Vagina (tissue), 2 donors: ENCODE measurements at regions of chr21 and their contacts with region 1.

Region 1: GRCh38 chr21:45554477-45555175 is 12.4 kb upstream of the SLC19A1 start:
- DNase-seq: no peak
- H3K4me3 ChIP-seq: peak overlapping the region; percentile 60 to 62
- H3K27ac ChIP-seq: peak overlapping the region; percentile 83
- H3K4me1 ChIP-seq: no peaks in the 10 kb centered on the region
- H3K27me3 ChIP-seq: no peaks in the 10 kb centered on the region
- CTCF ChIP-seq: peak; percentile 69 to 91 (median 91)
- POLR2A ChIP-seq: no peak

Region 2: GRCh38 chr21:45496968-45497845 is 57.4 kb before region 1 on chr21:
- intact Hi-C with region 1: no loop called
- DNase-seq: no peak
- H3K4me3 ChIP-seq: no peak overlapping the region
- H3K27ac ChIP-seq: no peak overlapping the region
- H3K4me1 ChIP-seq: no peaks in the 10 kb centered on the region
- H3K27me3 ChIP-seq: no peaks in the 10 kb centered on the region
- CTCF ChIP-seq: no peak
- POLR2A ChIP-seq: no peak

Region 3: DNA sequence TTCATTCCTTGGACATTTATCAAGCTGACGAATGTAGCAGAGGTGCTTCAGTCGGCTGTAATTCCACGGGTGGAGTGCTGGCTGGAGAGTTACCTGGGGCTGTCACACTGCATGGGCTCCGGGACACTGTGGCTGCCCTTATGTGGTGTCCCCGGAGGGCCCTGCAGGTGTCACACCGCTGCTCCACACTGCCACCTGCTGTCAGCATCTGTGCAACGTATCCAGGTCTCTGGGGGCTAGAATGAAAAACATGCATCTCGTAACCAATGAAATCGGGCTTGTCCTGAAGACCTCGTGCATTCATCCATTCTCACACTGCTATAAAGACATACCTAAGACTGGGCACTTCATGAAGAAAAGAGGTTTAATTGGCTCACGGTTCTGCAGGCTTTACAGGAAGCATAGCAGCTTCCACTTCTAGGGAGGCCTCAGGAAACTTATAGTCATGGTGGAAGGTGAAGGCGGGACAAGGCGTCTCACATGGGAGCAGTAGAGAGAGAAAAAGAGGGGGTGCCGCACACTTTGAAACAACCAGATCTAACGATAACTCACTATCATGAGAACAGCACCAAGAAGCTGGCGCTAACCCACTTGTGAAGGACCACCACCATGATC is 42.2 kb after region 1 on chr21:
- intact Hi-C with region 1: loop called (anchors 5 kb)
- DNase-seq: no peak
- H3K4me3 ChIP-seq: no peak overlapping the region
- H3K27ac ChIP-seq: no peak overlapping the region
- H3K4me1 ChIP-seq: no peaks in the 10 kb centered on the region
- H3K27me3 ChIP-seq: no peaks in the 10 kb centered on the region
- CTCF ChIP-seq: peak; percentile 22 to 72 (median 65)
- POLR2A ChIP-seq: no peak

Region 4: DNA sequence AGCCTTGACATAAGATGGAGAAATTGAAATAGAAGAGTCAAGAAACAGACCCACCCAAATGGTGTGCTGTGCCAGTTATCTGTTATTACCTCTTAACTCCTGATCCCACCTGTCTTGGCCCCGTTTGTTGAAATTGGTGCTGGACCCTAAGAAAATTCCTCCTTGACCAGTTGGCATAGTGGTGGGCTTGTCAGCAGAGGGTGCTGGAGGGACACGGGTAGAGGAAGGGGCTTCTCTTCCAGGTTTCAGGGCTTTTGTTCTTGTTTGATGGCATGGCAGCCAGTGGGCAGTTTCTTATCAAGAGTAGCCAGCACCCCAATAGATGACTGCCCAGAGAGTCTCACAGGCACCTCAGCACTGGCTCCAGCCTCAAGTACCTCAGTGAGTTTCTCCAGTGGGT is 140.5 kb after region 1 on chr21:
- intact Hi-C with region 1: no loop called
- DNase-seq: no peak
- H3K4me3 ChIP-seq: no peak overlapping the region
- H3K27ac ChIP-seq: no peak overlapping the region
- H3K4me1 ChIP-seq: no peaks in the 10 kb centered on the region
- H3K27me3 ChIP-seq: no peaks in the 10 kb centered on the region
- CTCF ChIP-seq: no peak
- POLR2A ChIP-seq: no peak

Region 5: GRCh38 chr21:45763074-45763473 is 208.4 kb after region 1 on chr21:
- intact Hi-C with region 1: no loop called
- DNase-seq: no peak
- H3K4me3 ChIP-seq: no peak overlapping the region
- H3K27ac ChIP-seq: no peak overlapping the region
- H3K4me1 ChIP-seq: no peaks in the 10 kb centered on the region
- H3K27me3 ChIP-seq: no peaks in the 10 kb centered on the region
- CTCF ChIP-seq: no peak
- POLR2A ChIP-seq: no peak

Region 6: DNA sequence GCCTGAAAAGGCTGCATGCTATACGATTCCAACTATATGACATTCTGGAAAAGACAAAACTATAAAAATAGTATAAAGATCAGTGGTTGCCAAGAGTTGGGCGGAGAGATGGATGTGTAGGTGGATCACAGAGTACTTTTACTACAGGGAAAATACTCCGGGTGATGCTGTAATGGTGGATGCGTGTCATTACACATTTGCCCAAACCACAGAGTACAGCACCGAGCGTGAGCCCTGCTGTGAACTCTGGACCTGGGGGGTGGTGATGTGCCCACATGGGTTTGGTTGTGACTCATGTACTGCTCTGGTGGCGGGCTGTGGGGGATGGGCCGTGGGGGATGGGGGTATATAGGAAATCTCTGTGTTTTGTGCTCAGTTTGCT is 264.3 kb after region 1 on chr21:
- intact Hi-C with region 1: loop called (anchors 10 kb)
- DNase-seq: peak in 1 of 2 donors; percentile 22
- H3K4me3 ChIP-seq: no peak overlapping the region
- H3K27ac ChIP-seq: no peak overlapping the region
- H3K4me1 ChIP-seq: no peaks in the 10 kb centered on the region
- H3K27me3 ChIP-seq: no peaks in the 10 kb centered on the region
- CTCF ChIP-seq: no peak
- POLR2A ChIP-seq: no peak

Region 7: GRCh38 chr21:45981151-45982089 is 426.8 kb after region 1 on chr21 and contains the start of gene COL6A1:
- intact Hi-C with region 1: no loop called
- DNase-seq: peak in 1 of 2 donors; percentile 96
- H3K4me3 ChIP-seq: peak within 1 kb of the TSS; percentile 65 to 72
- H3K27ac ChIP-seq: peak within 1 kb of the TSS; percentile 97
- H3K4me1 ChIP-seq: peaks cover 35% of the 10 kb centered on the region
- H3K27me3 ChIP-seq: no peaks in the 10 kb centered on the region
- CTCF ChIP-seq: no peak
- POLR2A ChIP-seq: peak in 1 of 2 donors; percentile 87
- total RNA-seq, gene COL6A1: 520 TPM